Esophagus muscularis mucosa (tissue), 4 donors: ENCODE measurements at regions of chr2 and their contacts with region 1.

Region 1: DNA sequence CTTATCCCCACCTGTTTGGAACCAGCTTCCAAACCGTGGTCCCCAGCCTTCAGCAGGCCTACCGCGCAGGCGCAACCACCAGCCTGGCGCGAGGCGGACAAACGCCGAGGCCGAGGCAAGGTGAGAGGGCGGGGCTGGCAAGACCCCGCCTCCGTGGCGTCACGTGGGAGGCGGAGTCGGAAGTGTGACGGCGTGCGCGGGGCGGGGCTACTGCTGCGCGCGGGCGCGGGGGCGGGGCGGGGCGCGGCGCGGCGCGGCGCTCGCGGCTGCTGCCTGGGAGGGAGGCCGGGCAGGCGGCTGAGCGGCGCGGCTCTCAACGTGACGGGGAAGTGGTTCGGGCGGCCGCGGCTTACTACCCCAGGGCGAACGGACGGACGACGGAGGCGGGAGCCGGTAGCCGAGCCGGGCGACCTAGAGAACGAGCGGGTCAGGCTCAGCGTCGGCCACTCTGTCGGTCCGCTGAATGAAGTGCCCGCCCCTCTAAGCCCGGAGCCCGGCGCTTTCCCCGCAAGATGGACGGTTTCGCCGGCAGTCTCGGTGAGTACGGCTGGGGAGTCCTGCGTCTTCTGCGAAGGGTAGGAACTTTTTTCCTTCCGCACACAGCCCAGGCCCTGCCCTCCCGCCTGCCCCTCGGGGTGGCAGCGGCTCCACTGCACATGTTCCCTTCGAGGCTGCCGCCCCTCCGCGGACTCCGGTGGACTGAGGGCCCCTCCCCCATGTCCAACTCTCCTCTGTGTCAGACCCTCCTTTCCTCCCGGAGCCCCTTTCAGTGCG is at the start of gene EML4:
- DNase-seq: peak; percentile 98
- H3K4me3 ChIP-seq: peak within 1 kb of the TSS; percentile 83 to 95 (median 88)
- H3K27ac ChIP-seq: peak within 1 kb of the TSS; percentile 90 to 91 (median 90)
- H3K4me1 ChIP-seq: peaks cover 28 to 40% (median 38%) of the 10 kb centered on the region in 4 donors
- H3K27me3 ChIP-seq: no peaks in the 10 kb centered on the region
- CTCF ChIP-seq: no peak
- EP300 ChIP-seq: no peak
- POLR2A ChIP-seq: peak; percentile 42
- total RNA-seq, gene EML4: 14.5 to 23.2 (median 17.8) TPM

Region 2: GRCh38 chr2:41998186-41999127 is 170.8 kb before region 1 on chr2:
- intact Hi-C with region 1: no loop called
- DNase-seq: peak; percentile 87
- H3K4me3 ChIP-seq: no peak overlapping the region
- H3K27ac ChIP-seq: no peak overlapping the region
- H3K4me1 ChIP-seq: peaks cover 0 to 6% (median 0%) of the 10 kb centered on the region in 4 donors
- H3K27me3 ChIP-seq: no peaks in the 10 kb centered on the region
- CTCF ChIP-seq: no peak
- EP300 ChIP-seq: no peak
- POLR2A ChIP-seq: no peak

Region 3: GRCh38 chr2:42102024-42102590 is 67.2 kb before region 1 on chr2:
- intact Hi-C with region 1: loop called (anchors 2 kb)
- DNase-seq: no peak
- H3K4me3 ChIP-seq: peak overlapping the region; percentile 55 to 60 (median 56)
- H3K27ac ChIP-seq: peak overlapping the region; percentile 85 to 90 (median 88)
- H3K4me1 ChIP-seq: peaks cover 30 to 50% (median 49%) of the 10 kb centered on the region in 4 donors
- H3K27me3 ChIP-seq: no peaks in the 10 kb centered on the region
- CTCF ChIP-seq: no peak
- EP300 ChIP-seq: no peak
- POLR2A ChIP-seq: no peak

Region 4: GRCh38 chr2:42132966-42133641 is 36.2 kb before region 1 on chr2:
- intact Hi-C with region 1: loop called (anchors 5 kb)
- DNase-seq: peak; percentile 95
- H3K4me3 ChIP-seq: peak overlapping the region; percentile 29 to 36 (median 32)
- H3K27ac ChIP-seq: peak overlapping the region; percentile 76 to 86 (median 82)
- H3K4me1 ChIP-seq: peaks cover 33 to 65% (median 59%) of the 10 kb centered on the region in 4 donors
- H3K27me3 ChIP-seq: no peaks in the 10 kb centered on the region
- CTCF ChIP-seq: no peak
- EP300 ChIP-seq: no peak
- POLR2A ChIP-seq: no peak